B cell (primary cell): ENCODE measurements at regions of chr2 and their contacts with region 1.

Region 1: DNA sequence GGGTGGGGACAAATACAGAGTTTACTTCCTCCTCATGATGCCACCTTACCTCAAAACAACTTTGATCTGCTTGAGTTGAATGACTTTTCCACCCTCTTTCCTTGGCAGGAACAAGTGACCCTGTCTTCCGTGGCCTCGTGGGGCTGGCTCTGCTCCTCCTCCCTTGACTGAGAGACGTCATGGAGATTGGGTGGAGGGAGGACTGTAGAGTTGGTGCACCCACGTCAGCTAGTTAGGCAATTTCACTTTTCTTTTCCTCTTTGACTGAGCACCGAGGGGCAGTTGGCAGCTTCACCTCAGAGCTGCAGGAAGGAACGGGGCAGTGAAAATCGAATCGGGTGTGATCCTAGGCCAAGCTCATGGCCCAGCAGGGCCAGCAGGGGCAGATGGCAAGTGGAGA is at the start of gene SP140:
- DNase-seq: peak; percentile 91
- ATAC-seq: peak; percentile 77
- H3K4me3 ChIP-seq: peak within 1 kb of the TSS; percentile 51 to 96 (median 72)
- H3K4me3 Mint-ChIP-seq: peak within 1 kb of the TSS; percentile 88
- H3K27ac ChIP-seq: peak within 1 kb of the TSS; percentile 86 to 87
- H3K27ac Mint-ChIP-seq: peak within 1 kb of the TSS; percentile 96
- H3K4me1 ChIP-seq: peaks cover 58 to 74% of the 10 kb centered on the region in 2 donors
- H3K4me1 Mint-ChIP-seq: peaks cover 76% of the 10 kb centered on the region
- H3K27me3 ChIP-seq: no peaks in the 10 kb centered on the region
- H3K27me3 Mint-ChIP-seq: no peaks in the 10 kb centered on the region
- CTCF ChIP-seq: no peak
- total RNA-seq, gene SP140: 411 and 424 TPM in 2 replicates

Region 2: GRCh38 chr2:229921892-229922445 is 303.5 kb before region 1 on chr2 and contains the start of gene TRIP12:
- CTCF ChIA-PET with region 1: no interaction called
- POLR2A ChIA-PET with region 1: no interaction called
- intact Hi-C with region 1: no loop called
- DNase-seq: peak; percentile 99
- ATAC-seq: peak; percentile 75
- H3K4me3 ChIP-seq: peak within 1 kb of the TSS; percentile 83 to 98 (median 93)
- H3K4me3 Mint-ChIP-seq: peak within 1 kb of the TSS; percentile 96
- H3K27ac ChIP-seq: peak within 1 kb of the TSS; percentile 83 to 98
- H3K27ac Mint-ChIP-seq: peak within 1 kb of the TSS; percentile 97
- H3K4me1 ChIP-seq: peaks cover 20 to 24% of the 10 kb centered on the region in 2 donors
- H3K4me1 Mint-ChIP-seq: peaks cover 39% of the 10 kb centered on the region
- H3K27me3 ChIP-seq: no peaks in the 10 kb centered on the region
- H3K27me3 Mint-ChIP-seq: no peaks in the 10 kb centered on the region
- CTCF ChIP-seq: no peak
- total RNA-seq, gene TRIP12: 254 and 274 TPM in 2 replicates

Region 3: GRCh38 chr2:230256733-230257332 is 31.3 kb after region 1 on chr2:
- CTCF ChIA-PET with region 1: interaction called, 3 read pairs
- POLR2A ChIA-PET with region 1: interaction called, 3 read pairs
- intact Hi-C with region 1: loop called (anchors 1 kb)
- DNase-seq: no peak
- ATAC-seq: no peak
- H3K4me3 ChIP-seq: no peak overlapping the region
- H3K4me3 Mint-ChIP-seq: peak overlapping the region; percentile 68
- H3K27ac ChIP-seq: peak overlapping the region; percentile 43 to 78
- H3K27ac Mint-ChIP-seq: peak overlapping the region; percentile 83
- H3K4me1 ChIP-seq: peaks cover 20 to 26% of the 10 kb centered on the region in 2 donors
- H3K4me1 Mint-ChIP-seq: peaks cover 45% of the 10 kb centered on the region
- H3K27me3 ChIP-seq: no peaks in the 10 kb centered on the region
- H3K27me3 Mint-ChIP-seq: no peaks in the 10 kb centered on the region
- CTCF ChIP-seq: no peak

Region 4: GRCh38 chr2:230268606-230269243 is 43.2 kb after region 1 on chr2:
- CTCF ChIA-PET with region 1: interaction called, 6 read pairs
- POLR2A ChIA-PET with region 1: interaction called, 3 read pairs
- intact Hi-C with region 1: loop called (anchors 2 kb)
- DNase-seq: no peak
- ATAC-seq: no peak
- H3K4me3 ChIP-seq: no peak overlapping the region
- H3K4me3 Mint-ChIP-seq: peak overlapping the region; percentile 54
- H3K27ac ChIP-seq: peak overlapping the region; percentile 1 to 31
- H3K27ac Mint-ChIP-seq: peak overlapping the region; percentile 84
- H3K4me1 ChIP-seq: peaks cover 32 to 38% of the 10 kb centered on the region in 2 donors
- H3K4me1 Mint-ChIP-seq: peaks cover 64% of the 10 kb centered on the region
- H3K27me3 ChIP-seq: no peaks in the 10 kb centered on the region
- H3K27me3 Mint-ChIP-seq: no peaks in the 10 kb centered on the region
- CTCF ChIP-seq: no peak

Region 5: GRCh38 chr2:230319211-230319862 is 93.9 kb after region 1 on chr2:
- CTCF ChIA-PET with region 1: no interaction called
- POLR2A ChIA-PET with region 1: interaction called, 3 read pairs
- intact Hi-C with region 1: loop called (anchors 2 kb)
- DNase-seq: peak; percentile 78
- ATAC-seq: peak; percentile 84
- H3K4me3 ChIP-seq: peak overlapping the region in 4 of 5 experiments; percentile 6 to 47 (median 21)
- H3K4me3 Mint-ChIP-seq: peak overlapping the region; percentile 69
- H3K27ac ChIP-seq: peak overlapping the region; percentile 79 to 86
- H3K27ac Mint-ChIP-seq: peak overlapping the region; percentile 92
- H3K4me1 ChIP-seq: peaks cover 41 to 63% of the 10 kb centered on the region in 2 donors
- H3K4me1 Mint-ChIP-seq: peaks cover 76% of the 10 kb centered on the region
- H3K27me3 ChIP-seq: no peaks in the 10 kb centered on the region
- H3K27me3 Mint-ChIP-seq: no peaks in the 10 kb centered on the region
- CTCF ChIP-seq: no peak

Region 6: DNA sequence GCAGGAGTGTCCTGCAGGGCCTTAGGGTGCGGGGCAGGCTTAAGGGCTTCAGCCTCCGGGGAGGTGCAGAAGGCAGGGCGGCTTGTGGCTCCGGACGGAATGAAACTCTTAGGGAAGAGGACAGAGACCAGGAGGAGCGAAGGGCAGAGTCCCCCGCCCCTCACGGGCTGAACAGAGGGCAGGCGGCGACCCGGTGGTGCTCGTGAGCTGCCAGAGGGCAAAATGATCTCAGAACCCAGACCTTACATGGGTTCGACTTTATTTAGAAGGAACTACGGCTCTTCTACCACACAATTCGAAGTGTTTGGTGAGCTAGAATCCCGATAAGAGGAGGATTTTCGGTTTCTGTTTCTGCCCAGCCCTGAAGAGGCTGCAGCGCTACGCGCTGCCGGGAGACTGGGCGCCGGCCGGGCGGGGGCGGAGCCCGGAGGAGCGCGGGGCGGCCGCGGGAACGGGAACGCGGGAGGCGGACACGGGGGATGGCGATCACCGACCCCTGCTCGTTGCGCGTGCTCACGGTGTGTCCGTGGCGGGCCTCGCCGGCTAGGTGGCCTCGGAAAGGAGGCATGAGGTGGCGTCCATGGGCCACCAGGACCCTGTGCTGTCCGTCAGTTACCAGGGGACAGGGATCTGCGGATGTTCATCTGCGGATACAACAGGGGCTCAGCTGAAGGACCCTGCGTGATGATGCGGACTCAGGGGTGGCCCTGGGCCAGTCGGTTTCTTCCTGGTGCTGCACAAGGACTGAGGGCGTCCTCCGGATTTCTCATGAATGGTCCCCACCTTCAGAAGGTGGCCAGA is 186.3 kb after region 1 on chr2:
- CTCF ChIA-PET with region 1: no interaction called
- POLR2A ChIA-PET with region 1: no interaction called
- intact Hi-C with region 1: loop called (anchors 2 kb)
- DNase-seq: peak; percentile 81
- ATAC-seq: peak; percentile 62
- H3K4me3 ChIP-seq: peak overlapping the region; percentile 69 to 92 (median 88)
- H3K4me3 Mint-ChIP-seq: peak overlapping the region; percentile 98
- H3K27ac ChIP-seq: peak overlapping the region; percentile 88 to 92
- H3K27ac Mint-ChIP-seq: peak overlapping the region; percentile 99
- H3K4me1 ChIP-seq: peaks cover 54 to 63% of the 10 kb centered on the region in 2 donors
- H3K4me1 Mint-ChIP-seq: peaks cover 72% of the 10 kb centered on the region
- H3K27me3 ChIP-seq: no peaks in the 10 kb centered on the region
- H3K27me3 Mint-ChIP-seq: no peaks in the 10 kb centered on the region
- CTCF ChIP-seq: no peak